ENCODE measurements at regions of chr16 and their contacts with region 1.

Region 1: GRCh38 chr16:81366316-81366932 is 51.7 kb downstream of the GAN start:
- DNase-seq: peak; percentile 40 to 67
- ATAC-seq: peak; percentile 80 to 88
- H3K4me3 ChIP-seq: no peak overlapping the region
- H3K27ac ChIP-seq: peak overlapping the region; percentile 31 to 61; a peak in 5 of 6 replicates
- H3K4me1 ChIP-seq: 0 out of 3 replicates have a peak, but pooled peaks cover 4% of the 10 kb centered on the region
- CTCF ChIP-seq: peak; percentile 90
- EP300 ChIP-seq: no peak
- POLR2A ChIP-seq: no peak
- RAD21 ChIP-seq: peak; percentile 93 to 94

Region 2: DNA sequence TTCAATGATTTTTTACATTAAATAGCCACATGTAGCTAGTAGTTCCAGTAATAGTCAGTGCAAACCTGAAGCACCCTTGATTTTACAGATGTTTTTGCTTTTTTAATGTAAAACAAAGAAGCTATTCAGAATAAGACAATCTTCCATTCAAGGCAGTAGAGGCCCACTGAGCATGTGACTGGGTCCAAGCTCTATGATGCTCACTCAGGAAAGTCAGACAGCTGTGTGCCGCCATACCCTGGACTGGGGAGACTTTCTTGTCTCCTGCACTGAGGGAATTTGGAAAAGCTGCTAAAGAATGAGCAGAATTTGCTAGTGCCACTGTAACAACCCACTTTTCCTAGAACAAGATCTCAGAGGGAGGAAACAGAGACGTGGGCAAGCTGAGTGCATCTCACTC is 347.9 kb before region 1 on chr16:
- CTCF ChIA-PET with region 1: no interaction called
- POLR2A ChIA-PET with region 1: no interaction called
- DNase-seq: no peak
- ATAC-seq: no peak
- H3K4me3 ChIP-seq: no peak overlapping the region
- H3K27ac ChIP-seq: no peak overlapping the region
- H3K4me1 ChIP-seq: no peaks in the 10 kb centered on the region
- CTCF ChIP-seq: no peak
- EP300 ChIP-seq: no peak
- POLR2A ChIP-seq: no peak
- RAD21 ChIP-seq: no peak

Region 3: DNA sequence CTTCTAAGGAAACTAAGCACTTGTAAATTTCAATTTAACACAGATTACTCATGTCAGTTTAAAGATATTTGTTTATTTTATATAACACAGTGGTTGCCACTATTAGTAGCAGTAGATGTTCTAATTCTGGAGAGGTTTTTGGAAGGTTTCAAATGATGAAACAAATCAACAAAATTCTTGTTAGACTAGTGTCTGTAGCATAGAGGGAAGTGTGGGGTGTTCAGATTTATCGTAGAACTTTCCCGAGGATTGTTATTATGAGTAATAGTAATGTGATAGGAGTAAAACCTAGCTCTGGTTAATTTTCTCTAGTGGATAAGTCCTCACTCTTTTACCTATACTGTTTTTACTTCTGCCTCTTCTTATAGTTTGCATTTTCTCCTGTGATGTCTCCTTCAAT is 45.4 kb before region 1 on chr16:
- CTCF ChIA-PET with region 1: no interaction called
- POLR2A ChIA-PET with region 1: no interaction called
- DNase-seq: no peak
- ATAC-seq: no peak
- H3K4me3 ChIP-seq: no peak overlapping the region
- H3K27ac ChIP-seq: no peak overlapping the region
- H3K4me1 ChIP-seq: peaks cover 37% of the 10 kb centered on the region
- CTCF ChIP-seq: no peak
- EP300 ChIP-seq: no peak
- POLR2A ChIP-seq: no peak
- RAD21 ChIP-seq: no peak

Region 4: GRCh38 chr16:81353895-81354294 is 12.5 kb before region 1 on chr16:
- CTCF ChIA-PET with region 1: interaction called, 28 read pairs
- POLR2A ChIA-PET with region 1: no interaction called
- DNase-seq: no peak
- ATAC-seq: no peak
- H3K4me3 ChIP-seq: no peak overlapping the region
- H3K27ac ChIP-seq: no peak overlapping the region
- H3K4me1 ChIP-seq: no peaks in the 10 kb centered on the region
- CTCF ChIP-seq: no peak
- EP300 ChIP-seq: no peak
- POLR2A ChIP-seq: no peak
- RAD21 ChIP-seq: no peak

Region 5: DNA sequence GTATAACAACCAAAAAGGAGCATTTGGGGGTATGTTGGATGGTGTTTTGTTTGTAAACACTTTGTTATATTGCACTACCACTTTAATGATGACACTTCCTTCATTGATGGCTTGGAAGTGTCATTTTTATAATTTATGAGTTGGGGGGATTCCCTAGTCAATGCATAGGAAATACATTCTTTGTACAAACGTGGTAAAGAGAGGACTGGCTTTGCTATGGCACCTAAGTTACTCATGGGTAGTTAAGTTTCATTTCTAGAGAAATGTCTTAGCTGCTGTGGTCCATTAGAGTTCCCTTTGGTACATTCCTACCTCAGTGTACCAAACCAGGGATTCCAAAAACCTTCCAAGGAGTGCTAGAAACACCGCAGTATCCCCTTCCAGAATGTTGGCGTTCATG is 14.5 kb after region 1 on chr16:
- CTCF ChIA-PET with region 1: interaction called, 10 read pairs
- POLR2A ChIA-PET with region 1: no interaction called
- DNase-seq: no peak
- ATAC-seq: no peak
- H3K4me3 ChIP-seq: no peak overlapping the region
- H3K27ac ChIP-seq: no peak overlapping the region
- H3K4me1 ChIP-seq: peaks cover 5% of the 10 kb centered on the region; the same call in 1 of the 3 replicates
- CTCF ChIP-seq: no peak
- EP300 ChIP-seq: no peak
- POLR2A ChIP-seq: no peak
- RAD21 ChIP-seq: no peak

Region 6: DNA sequence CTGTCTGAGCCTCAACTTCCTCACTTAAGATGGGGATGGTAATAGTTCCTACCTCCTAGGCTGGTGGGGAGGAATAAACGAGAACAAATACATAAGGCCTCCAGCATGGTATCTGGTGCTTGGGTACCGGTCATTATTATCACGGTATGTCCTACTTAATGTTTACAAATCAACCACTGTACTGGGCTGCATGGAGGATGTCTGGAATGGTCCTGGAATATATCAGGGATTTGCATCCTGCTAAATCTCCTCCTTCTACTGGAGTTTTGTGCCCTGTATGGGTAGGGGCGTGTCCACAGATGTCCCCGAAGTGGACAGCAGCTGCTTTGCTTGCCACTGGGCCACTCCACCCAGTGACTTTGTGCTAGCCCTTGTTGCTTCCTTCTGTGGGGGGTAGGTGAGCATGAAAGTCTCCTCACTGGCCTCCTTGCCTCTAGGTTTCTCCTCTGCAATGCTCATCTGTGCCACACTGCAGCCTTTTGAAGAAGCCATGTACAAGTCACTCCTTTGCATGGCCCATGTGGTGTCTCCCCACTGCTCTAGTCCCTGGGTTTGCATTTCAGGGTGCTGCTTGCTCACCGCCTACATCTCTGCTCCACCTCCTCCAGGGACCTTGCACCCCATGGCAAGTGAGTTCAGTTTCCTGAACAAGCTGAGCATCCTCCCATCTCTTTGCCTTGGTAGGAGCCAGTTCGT is 75.9 kb after region 1 on chr16:
- CTCF ChIA-PET with region 1: no interaction called
- POLR2A ChIA-PET with region 1: no interaction called
- DNase-seq: no peak
- ATAC-seq: no peak
- H3K4me3 ChIP-seq: no peak overlapping the region
- H3K27ac ChIP-seq: peak overlapping the region; percentile 98 to 99
- H3K4me1 ChIP-seq: peaks cover 19% of the 10 kb centered on the region
- CTCF ChIP-seq: no peak
- EP300 ChIP-seq: no peak
- POLR2A ChIP-seq: no peak
- RAD21 ChIP-seq: no peak

Region 7: GRCh38 chr16:81696961-81697615 is 330.7 kb after region 1 on chr16:
- CTCF ChIA-PET with region 1: interaction called, 14 read pairs
- POLR2A ChIA-PET with region 1: no interaction called
- DNase-seq: peak; percentile 59 to 76
- ATAC-seq: peak; percentile 59 to 78; a peak in 5 of 6 replicates
- H3K4me3 ChIP-seq: no peak overlapping the region
- H3K27ac ChIP-seq: peak overlapping the region; percentile 10 to 75; a peak in 4 of 6 replicates
- H3K4me1 ChIP-seq: peaks cover 40% of the 10 kb centered on the region
- CTCF ChIP-seq: peak; percentile 66
- EP300 ChIP-seq: no peak
- POLR2A ChIP-seq: no peak
- RAD21 ChIP-seq: peak; percentile 70 to 73

Region 8: DNA sequence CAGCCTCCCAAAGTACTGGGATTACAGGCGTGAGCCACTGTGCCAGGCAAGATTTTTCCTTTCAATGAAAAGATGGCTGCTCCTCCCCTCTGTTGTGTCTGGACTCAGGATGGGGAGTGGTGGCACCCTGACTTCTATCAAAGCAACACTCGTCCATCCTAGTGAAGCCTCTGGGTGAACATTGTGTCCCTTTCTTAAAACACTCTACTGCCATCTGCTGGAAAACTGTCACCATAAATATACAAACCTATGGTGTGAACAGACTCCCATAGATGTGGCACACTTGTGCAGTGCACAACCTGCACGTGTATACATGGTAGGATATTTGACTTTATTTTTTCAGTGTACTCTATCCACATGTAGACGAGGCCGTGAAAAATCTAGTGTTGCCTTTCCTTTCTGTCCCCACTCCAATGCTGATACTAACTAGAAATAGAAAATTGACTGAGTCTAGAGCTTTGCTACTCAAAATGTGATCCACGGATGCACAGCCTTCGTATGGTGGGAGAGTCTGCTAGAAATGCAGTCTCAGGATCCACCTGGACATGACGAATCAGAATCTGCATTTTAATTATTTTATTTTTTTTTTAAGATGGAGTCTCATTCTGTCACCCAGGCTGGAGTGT is 356.8 kb after region 1 on chr16:
- CTCF ChIA-PET with region 1: interaction called, 49 read pairs
- POLR2A ChIA-PET with region 1: no interaction called
- DNase-seq: peak; percentile 89 to 92
- ATAC-seq: peak; percentile 93 to 94
- H3K4me3 ChIP-seq: no peak overlapping the region
- H3K27ac ChIP-seq: peak overlapping the region; percentile 75 to 94
- H3K4me1 ChIP-seq: peaks cover 36% of the 10 kb centered on the region
- CTCF ChIP-seq: peak; percentile 90
- EP300 ChIP-seq: no peak
- POLR2A ChIP-seq: no peak
- RAD21 ChIP-seq: peak; percentile 94 to 96

Region 9: DNA sequence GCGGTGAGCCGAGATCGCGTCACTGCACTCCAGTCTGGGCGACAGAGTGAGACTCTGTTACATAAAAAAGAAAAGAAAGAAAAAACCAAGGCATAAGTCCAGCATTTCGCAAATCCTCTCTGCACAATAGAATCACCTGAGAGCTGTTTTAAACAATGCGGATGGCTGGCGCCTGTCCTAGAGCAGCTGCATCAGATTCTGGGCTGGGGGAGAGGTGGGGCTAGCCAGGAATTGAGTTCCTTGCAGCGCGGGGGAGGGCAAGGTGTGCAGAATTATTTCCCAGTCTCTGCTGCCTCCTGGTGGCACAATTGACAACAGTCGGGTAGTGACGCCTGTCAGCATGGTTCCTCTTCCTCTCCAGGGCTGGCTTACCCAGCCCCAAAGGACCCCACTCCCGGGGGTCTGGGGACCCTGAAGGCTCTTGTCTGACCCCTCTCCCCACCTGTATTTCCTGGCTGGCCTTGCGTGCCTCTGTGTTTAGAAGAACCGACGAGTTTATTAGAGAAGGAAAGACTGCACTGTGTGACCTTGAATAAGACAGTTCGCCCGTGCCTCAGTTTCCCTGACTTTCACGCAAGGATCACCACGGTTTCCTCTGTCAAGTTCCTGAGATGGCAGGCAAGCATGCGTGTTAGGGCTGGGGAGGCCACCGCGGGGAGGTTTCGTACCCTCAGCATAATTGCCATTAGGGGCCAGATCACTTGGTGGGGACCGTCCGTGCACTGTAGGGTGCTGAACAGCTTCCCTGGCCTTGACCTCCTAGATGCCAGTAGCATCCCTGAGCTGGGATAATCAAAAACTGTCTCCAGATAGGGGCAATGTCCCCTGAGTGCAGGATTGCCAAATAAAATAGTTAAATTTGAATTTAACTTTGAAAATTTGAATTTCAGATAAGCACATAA is 371.7 kb after region 1 on chr16:
- CTCF ChIA-PET with region 1: interaction called, 91 read pairs
- POLR2A ChIA-PET with region 1: no interaction called
- DNase-seq: peak; percentile 86 to 87
- ATAC-seq: peak; percentile 93 to 94
- H3K4me3 ChIP-seq: peak overlapping the region; percentile 32; the same call in 2 of the 3 replicates
- H3K27ac ChIP-seq: peak overlapping the region; percentile 65 to 78
- H3K4me1 ChIP-seq: peaks cover 13% of the 10 kb centered on the region
- CTCF ChIP-seq: peak; percentile 94
- EP300 ChIP-seq: no peak
- POLR2A ChIP-seq: no peak
- RAD21 ChIP-seq: peak; percentile 98

Measured in A549 (cell line).